Naive thymus-derived CD4-positive, alpha-beta T cell (primary cell): ENCODE measurements at regions of chr3 and their contacts with region 1.

Region 1: DNA sequence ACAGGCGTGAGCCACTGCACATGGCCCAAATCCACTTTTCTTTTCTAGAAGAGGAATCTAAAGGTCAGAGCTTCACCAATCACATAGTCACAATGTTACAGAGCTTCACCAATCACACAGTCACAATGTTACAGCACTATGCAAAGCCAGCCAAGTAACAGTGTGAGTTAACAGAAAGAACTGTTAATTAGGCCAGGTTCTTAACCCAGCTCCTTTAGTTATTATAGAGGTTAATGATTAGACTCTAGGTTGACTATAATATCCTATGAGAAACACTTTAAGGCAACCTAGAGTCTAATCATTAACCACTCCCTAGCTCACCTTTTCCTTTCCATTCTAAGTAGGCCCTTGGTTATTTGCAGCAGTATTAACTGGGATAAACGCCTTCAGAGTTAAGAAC is 54.0 kb downstream of the TASOR start:
- DNase-seq: no peak
- ATAC-seq: no peak
- H3K4me3 ChIP-seq: no peak overlapping the region
- H3K4me3 Mint-ChIP-seq: no peak overlapping the region
- H3K27ac ChIP-seq: no peak overlapping the region
- H3K27ac Mint-ChIP-seq: peak overlapping the region in 8 of 9 donors; percentile 65 to 87 (median 72)
- H3K4me1 ChIP-seq: no peaks in the 10 kb centered on the region
- H3K4me1 Mint-ChIP-seq: peaks cover 0 to 22% (median 4%) of the 10 kb centered on the region in 7 donors
- H3K27me3 ChIP-seq: no peaks in the 10 kb centered on the region
- H3K27me3 Mint-ChIP-seq: no peaks in the 10 kb centered on the region

Region 2: GRCh38 chr3:56125358-56126005 is 503.6 kb before region 1 on chr3:
- CTCF ChIA-PET with region 1: no interaction called
- POLR2A ChIA-PET with region 1: no interaction called
- intact Hi-C with region 1: no loop called
- DNase-seq: no peak
- ATAC-seq: no peak
- H3K4me3 ChIP-seq: no peak overlapping the region
- H3K4me3 Mint-ChIP-seq: no peak overlapping the region
- H3K27ac ChIP-seq: no peak overlapping the region
- H3K27ac Mint-ChIP-seq: no peak overlapping the region
- H3K4me1 ChIP-seq: no peaks in the 10 kb centered on the region
- H3K4me1 Mint-ChIP-seq: no peaks in the 10 kb centered on the region
- H3K27me3 ChIP-seq: no peaks in the 10 kb centered on the region
- H3K27me3 Mint-ChIP-seq: peaks cover 0 to 16% (median 10%) of the 10 kb centered on the region in 5 donors

Region 3: DNA sequence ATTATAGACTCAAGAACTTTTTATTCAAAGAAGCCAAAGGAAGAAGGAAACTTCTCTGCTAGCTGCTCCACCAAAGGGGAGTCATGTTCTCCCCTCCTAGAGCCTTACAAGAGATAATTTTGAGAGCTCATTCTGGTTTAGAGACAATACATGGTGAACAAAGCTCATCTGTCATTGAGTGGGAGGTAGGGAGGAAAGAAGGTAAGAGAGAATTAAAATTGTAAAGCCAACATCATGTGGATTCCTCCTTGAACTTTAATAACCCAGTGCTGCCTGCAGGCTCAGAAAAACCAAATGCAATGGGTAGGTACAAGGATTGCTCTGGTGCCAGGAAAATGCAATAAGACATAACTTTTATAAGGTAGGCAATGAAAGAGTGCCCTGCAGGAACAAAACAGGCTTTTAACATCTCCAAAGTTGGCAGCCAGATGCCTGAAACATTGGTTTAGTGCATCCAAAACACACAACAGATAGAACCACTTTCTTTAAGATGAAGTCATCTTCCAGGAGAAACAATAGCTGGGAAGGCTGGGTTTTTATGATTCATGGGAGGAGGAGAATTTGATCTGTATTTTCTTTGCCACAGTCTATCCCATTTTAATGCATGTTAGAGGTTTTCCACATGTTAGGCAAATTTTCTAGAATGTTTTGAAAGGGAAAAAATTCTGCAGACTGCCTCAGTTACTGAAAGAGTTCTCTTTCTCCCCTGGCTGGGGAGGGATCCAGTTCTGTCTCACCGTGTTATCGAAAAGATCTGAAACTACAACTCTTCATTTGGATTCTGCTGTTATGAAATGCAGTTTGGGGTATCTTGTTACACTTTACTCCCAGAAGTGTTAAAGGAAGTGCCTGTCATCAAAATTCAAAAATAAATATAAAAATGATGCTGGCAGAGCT is 184.0 kb after region 1 on chr3:
- CTCF ChIA-PET with region 1: no interaction called
- POLR2A ChIA-PET with region 1: interaction called, 11 read pairs
- intact Hi-C with region 1: no loop called
- DNase-seq: no peak
- ATAC-seq: no peak
- H3K4me3 ChIP-seq: peak overlapping the region; percentile 4
- H3K4me3 Mint-ChIP-seq: peak overlapping the region; percentile 17 to 76 (median 64)
- H3K27ac ChIP-seq: peak overlapping the region; percentile 56
- H3K27ac Mint-ChIP-seq: peak overlapping the region; percentile 29 to 92 (median 86)
- H3K4me1 ChIP-seq: peaks cover 29 to 41% of the 10 kb centered on the region in 2 donors
- H3K4me1 Mint-ChIP-seq: peaks cover 38 to 82% (median 73%) of the 10 kb centered on the region in 7 donors
- H3K27me3 ChIP-seq: no peaks in the 10 kb centered on the region
- H3K27me3 Mint-ChIP-seq: no peaks in the 10 kb centered on the region